ENCODE measurements at regions of chr12 and their contacts with region 1.

Region 1: GRCh38 chr12:122021822-122022526 is at the start of gene BCL7A:
- DNase-seq: peak; percentile 60
- H3K4me3 Mint-ChIP-seq: peak within 1 kb of the TSS; percentile 94
- H3K27ac Mint-ChIP-seq: peak within 1 kb of the TSS; percentile 76
- H3K4me1 Mint-ChIP-seq: peaks cover 5% of the 10 kb centered on the region
- H3K27me3 Mint-ChIP-seq: no peaks in the 10 kb centered on the region
- CTCF ChIP-seq: no peak
- total RNA-seq, gene BCL7A: 17.9 and 18.1 TPM in 2 replicates

Region 2: DNA sequence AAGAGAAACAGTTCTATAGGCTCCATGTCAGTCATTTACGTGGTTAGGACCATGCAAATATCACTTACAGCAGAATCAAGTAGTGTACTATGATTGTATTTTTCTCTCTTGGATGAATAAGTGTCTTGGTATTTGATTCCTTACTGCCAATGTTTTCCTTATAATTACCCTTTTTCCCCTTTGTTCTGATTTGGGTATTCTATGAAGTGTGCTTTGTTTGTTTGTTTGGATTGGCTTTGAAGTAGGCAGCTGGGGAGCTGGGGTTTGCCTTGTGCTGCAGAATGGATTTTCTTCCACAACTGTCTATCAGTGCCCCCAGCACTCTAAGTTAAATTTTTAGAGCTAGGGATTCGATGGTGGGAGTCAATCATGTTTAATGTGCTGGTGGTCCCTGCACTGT is 297.0 kb before region 1 on chr12:
- CTCF ChIA-PET with region 1: no interaction called
- POLR2A ChIA-PET with region 1: no interaction called
- intact Hi-C with region 1: no loop called
- DNase-seq: no peak
- H3K4me3 Mint-ChIP-seq: no peak overlapping the region
- H3K27ac Mint-ChIP-seq: no peak overlapping the region
- H3K4me1 Mint-ChIP-seq: peaks cover 5% of the 10 kb centered on the region
- H3K27me3 Mint-ChIP-seq: no peaks in the 10 kb centered on the region
- CTCF ChIP-seq: no peak

Region 3: GRCh38 chr12:121802846-121803630 is 218.9 kb before region 1 on chr12:
- CTCF ChIA-PET with region 1: no interaction called
- POLR2A ChIA-PET with region 1: interaction called, 24 read pairs
- intact Hi-C with region 1: loop called (anchors 10 kb)
- DNase-seq: peak; percentile 96
- H3K4me3 Mint-ChIP-seq: peak overlapping the region; percentile 87
- H3K27ac Mint-ChIP-seq: peak overlapping the region; percentile 99
- H3K4me1 Mint-ChIP-seq: peaks cover 13% of the 10 kb centered on the region
- H3K27me3 Mint-ChIP-seq: no peaks in the 10 kb centered on the region
- CTCF ChIP-seq: no peak

Region 4: DNA sequence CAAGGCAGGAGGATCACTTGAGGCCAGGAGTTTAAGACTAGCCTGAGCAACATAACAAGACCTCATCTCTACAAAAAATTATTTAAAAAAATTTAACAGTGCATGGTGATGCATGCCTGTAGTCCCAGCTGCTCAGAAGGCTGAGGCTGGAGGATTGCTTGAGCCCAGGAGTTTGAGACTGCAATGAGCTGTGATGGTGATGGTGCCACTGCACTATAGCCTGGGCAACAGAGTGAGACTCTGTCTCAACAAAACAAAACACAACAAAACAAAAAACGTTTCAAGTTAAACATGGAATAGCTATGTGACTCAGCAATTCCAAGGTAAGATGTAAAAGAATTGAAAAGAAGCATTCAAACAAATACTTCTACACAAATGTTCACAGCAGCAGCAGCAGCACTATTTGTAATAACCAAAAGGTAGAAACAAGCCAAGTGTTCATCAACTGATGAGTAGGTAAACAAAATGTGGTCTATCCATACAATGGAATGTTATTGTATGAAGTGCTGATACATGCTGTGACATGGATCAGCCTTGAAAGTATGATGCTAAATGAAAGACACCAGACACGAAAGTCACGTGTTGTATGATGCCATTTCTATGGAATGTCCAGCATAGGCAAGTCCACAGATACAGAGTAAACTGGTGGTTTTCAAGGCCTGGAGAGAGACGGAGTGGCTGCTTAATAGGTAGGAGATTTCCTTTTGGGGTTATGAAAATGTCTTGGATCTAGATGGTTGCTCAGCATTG is 72.2 kb before region 1 on chr12:
- CTCF ChIA-PET with region 1: no interaction called
- POLR2A ChIA-PET with region 1: interaction called, 18 read pairs
- intact Hi-C with region 1: loop called (anchors 5 kb)
- DNase-seq: peak; percentile 82
- H3K4me3 Mint-ChIP-seq: peak overlapping the region; percentile 60
- H3K27ac Mint-ChIP-seq: peak overlapping the region; percentile 95
- H3K4me1 Mint-ChIP-seq: peaks cover 9% of the 10 kb centered on the region
- H3K27me3 Mint-ChIP-seq: no peaks in the 10 kb centered on the region
- CTCF ChIP-seq: no peak

Region 5: DNA sequence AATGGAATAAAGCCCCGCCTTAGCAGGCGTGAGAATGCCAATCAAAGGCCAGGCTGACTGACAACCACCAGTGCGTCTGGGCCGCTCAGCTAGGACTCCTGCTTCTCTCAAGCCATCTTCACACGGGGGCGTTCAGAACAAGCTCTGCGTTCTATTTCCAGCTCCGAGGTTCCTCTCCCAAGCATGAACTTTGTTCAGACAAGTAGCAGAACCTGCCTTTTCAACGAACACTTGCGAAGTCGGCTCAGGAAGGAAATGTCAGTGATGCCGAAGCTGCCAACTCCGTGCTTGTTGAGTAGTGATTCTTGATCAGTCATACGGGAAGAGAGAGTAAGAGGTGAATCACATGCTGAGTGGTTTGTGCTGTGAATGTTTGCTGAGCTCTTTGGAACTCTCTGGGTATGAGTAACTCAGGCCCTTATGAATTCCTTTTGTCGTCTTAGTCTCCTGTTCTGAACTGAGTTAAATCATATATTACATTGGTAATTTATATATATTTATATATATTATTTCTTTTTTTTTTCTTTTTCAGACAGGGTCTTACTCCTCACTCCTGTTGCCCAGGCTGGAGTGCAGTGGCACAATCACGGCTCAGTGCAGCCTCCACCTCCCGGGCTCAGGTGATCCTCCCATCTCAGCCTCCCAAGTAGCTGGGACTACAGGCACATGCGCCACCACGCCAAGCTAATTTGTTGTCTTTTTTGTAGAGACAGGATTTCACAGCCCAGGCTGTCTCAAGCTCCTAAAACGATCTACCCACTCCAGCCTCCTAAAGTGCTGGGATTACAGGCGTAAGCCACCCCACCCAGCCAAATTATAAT is 29.7 kb before region 1 on chr12:
- CTCF ChIA-PET with region 1: interaction called, 3 read pairs
- POLR2A ChIA-PET with region 1: interaction called, 44 read pairs
- intact Hi-C with region 1: no loop called
- DNase-seq: peak; percentile 93
- H3K4me3 Mint-ChIP-seq: peak overlapping the region; percentile 61
- H3K27ac Mint-ChIP-seq: peak overlapping the region; percentile 90
- H3K4me1 Mint-ChIP-seq: peaks cover 9% of the 10 kb centered on the region
- H3K27me3 Mint-ChIP-seq: no peaks in the 10 kb centered on the region
- CTCF ChIP-seq: no peak

Region 6: GRCh38 chr12:122003651-122004611 is 18.0 kb before region 1 on chr12:
- CTCF ChIA-PET with region 1: interaction called, 3 read pairs
- POLR2A ChIA-PET with region 1: interaction called, 41 read pairs
- intact Hi-C with region 1: no loop called
- DNase-seq: no peak
- H3K4me3 Mint-ChIP-seq: no peak overlapping the region
- H3K27ac Mint-ChIP-seq: no peak overlapping the region
- H3K4me1 Mint-ChIP-seq: peaks cover 6% of the 10 kb centered on the region
- H3K27me3 Mint-ChIP-seq: no peaks in the 10 kb centered on the region
- CTCF ChIP-seq: no peak

Region 7: GRCh38 chr12:122097927-122098756 is 76.2 kb after region 1 on chr12:
- CTCF ChIA-PET with region 1: no interaction called
- POLR2A ChIA-PET with region 1: interaction called, 19 read pairs
- intact Hi-C with region 1: no loop called
- DNase-seq: no peak
- H3K4me3 Mint-ChIP-seq: peak overlapping the region; percentile 51
- H3K27ac Mint-ChIP-seq: peak overlapping the region; percentile 97
- H3K4me1 Mint-ChIP-seq: peaks cover 39% of the 10 kb centered on the region
- H3K27me3 Mint-ChIP-seq: no peaks in the 10 kb centered on the region
- CTCF ChIP-seq: no peak

Measured in MCF 10A (cell line).